ENCODE measurements at regions of chr9 and their contacts with region 1.

Region 1: DNA sequence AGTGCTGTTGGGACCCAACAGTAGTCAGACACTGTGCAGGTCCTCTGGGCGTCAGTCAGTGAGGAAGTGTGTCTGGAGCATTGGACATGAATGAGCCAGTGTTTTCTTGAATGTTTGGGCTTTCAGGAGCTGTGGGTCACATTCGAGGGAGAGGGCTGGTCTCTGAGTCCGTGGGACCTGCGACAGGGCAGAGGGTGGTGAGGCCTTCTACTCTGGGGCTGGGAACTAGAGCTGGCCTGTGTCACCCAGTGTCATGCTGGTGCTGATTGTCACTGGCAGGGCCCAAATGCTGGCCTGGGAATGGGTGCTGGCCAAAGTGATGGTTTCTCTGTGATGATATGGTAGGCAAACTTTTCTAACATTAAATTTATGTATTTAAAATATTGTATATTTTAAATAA is 10.3 kb downstream of the POLR1E start:
- DNase-seq: no peak
- ATAC-seq: peak in 3 of 4 donors; percentile 17 to 56 (median 55)
- H3K4me3 ChIP-seq: no peak overlapping the region
- H3K27ac ChIP-seq: peak overlapping the region in 1 of 12 donors; percentile 34
- H3K4me1 ChIP-seq: peaks cover 0 to 4% (median 0%) of the 10 kb centered on the region in 12 donors
- H3K27me3 ChIP-seq: no peaks in the 10 kb centered on the region
- CTCF ChIP-seq: no peak
- POLR2A ChIP-seq: no peak

Region 2: GRCh38 chr9:37565661-37566618 is 69.9 kb after region 1 on chr9:
- intact Hi-C with region 1: loop called in 2 of 10 experiments (anchors 10 kb)
- DNase-seq: no peak
- ATAC-seq: no peak
- H3K4me3 ChIP-seq: no peak overlapping the region
- H3K27ac ChIP-seq: no peak overlapping the region
- H3K4me1 ChIP-seq: no peaks in the 10 kb centered on the region
- H3K27me3 ChIP-seq: no peaks in the 10 kb centered on the region
- CTCF ChIP-seq: no peak
- POLR2A ChIP-seq: no peak

Region 3: GRCh38 chr9:37575921-37576721 is 80.1 kb after region 1 on chr9 and contains the start of gene FBXO10:
- intact Hi-C with region 1: loop called in 1 of 10 experiments (anchors 10 kb)
- DNase-seq: peak; percentile 69 to 86 (median 78)
- ATAC-seq: peak; percentile 81 to 97 (median 95)
- H3K4me3 ChIP-seq: peak within 1 kb of the TSS; percentile 68 to 98 (median 82)
- H3K27ac ChIP-seq: peak within 1 kb of the TSS; percentile 27 to 90 (median 80)
- H3K4me1 ChIP-seq: peaks cover 0 to 24% (median 18%) of the 10 kb centered on the region in 12 donors
- H3K27me3 ChIP-seq: no peaks in the 10 kb centered on the region
- CTCF ChIP-seq: peak in 1 of 12 donors; percentile 4
- POLR2A ChIP-seq: peak in 1 of 2 donors; percentile 64
- total RNA-seq, gene FBXO10: 5.5 to 9.8 (median 7.3) TPM

Region 4: GRCh38 chr9:37784616-37785483 is 288.8 kb after region 1 on chr9 and contains the start of gene EXOSC3:
- intact Hi-C with region 1: loop called in 1 of 10 experiments (anchors 10 kb)
- DNase-seq: peak; percentile 88 to 93 (median 92)
- ATAC-seq: peak; percentile 95 to 98 (median 98)
- H3K4me3 ChIP-seq: peak within 1 kb of the TSS; percentile 74 to 98 (median 88)
- H3K27ac ChIP-seq: peak within 1 kb of the TSS; percentile 25 to 90 (median 84)
- H3K4me1 ChIP-seq: peaks cover 3 to 28% (median 18%) of the 10 kb centered on the region in 12 donors
- H3K27me3 ChIP-seq: peaks cover 0 to 9% (median 0%) of the 10 kb centered on the region in 9 donors
- CTCF ChIP-seq: peak in 7 of 12 donors; percentile 9 to 24 (median 16)
- POLR2A ChIP-seq: peak in 1 of 2 donors; percentile 70
- total RNA-seq, gene EXOSC3: 9.6 to 18.6 (median 14.0) TPM